ENCODE measurements at regions of chr2 and their contacts with region 1.

Region 1: DNA sequence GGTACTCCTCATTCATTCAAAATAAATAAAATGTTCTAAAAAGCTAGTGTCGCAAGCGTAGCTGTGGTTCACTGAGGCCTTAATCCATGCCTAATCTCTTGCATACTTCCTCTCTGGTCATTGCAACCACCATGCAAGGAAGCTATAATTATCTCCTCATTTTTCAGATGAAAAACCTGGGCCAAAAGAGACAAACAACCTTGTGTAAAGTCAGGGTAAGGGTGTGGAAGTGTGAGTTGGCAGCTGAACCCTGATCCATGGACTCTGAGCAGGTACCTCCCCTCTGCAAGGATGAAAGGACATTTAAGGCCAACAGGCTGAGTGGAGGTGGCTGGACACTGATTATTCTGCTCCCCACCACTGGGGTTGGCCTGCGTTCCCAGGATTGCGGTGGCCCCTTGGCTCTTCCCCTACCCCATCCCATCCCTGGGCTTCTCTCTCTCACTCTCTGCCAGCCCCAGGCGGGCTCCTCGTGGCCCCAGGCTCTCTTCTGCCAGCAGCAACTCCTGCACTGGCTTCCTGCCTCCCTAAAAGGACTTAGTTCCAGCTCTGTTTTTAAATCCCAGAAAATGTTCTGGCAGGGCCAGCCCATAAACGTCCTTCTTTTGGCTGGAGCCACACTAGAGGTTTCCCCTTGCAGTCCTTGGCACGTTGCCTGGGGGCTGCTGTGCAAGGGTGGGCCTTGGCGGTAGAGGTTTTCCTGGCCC is 72.0 kb upstream of the AFF3 start:
- DNase-seq: no peak

Region 2: DNA sequence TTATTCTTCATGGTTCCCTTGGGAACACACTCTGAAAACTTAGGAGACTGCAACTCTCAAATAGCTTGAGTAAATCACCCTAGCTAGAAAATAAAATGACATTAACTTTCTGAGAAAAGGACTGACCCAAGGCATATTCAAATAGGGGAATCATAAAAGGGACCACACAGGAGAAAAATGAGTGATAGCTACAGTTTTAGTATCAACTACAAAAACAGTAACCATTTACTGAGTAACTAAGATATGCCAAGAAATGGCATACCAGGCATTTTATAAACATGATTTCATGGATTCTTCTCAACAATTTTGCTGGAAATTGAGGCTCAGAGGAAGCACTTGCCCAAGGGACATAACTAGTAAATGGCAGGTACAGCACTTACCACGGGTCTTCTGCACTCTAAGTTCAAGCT is 156.5 kb before region 1 on chr2:
- intact Hi-C with region 1: no loop called
- DNase-seq: no peak

Region 3: DNA sequence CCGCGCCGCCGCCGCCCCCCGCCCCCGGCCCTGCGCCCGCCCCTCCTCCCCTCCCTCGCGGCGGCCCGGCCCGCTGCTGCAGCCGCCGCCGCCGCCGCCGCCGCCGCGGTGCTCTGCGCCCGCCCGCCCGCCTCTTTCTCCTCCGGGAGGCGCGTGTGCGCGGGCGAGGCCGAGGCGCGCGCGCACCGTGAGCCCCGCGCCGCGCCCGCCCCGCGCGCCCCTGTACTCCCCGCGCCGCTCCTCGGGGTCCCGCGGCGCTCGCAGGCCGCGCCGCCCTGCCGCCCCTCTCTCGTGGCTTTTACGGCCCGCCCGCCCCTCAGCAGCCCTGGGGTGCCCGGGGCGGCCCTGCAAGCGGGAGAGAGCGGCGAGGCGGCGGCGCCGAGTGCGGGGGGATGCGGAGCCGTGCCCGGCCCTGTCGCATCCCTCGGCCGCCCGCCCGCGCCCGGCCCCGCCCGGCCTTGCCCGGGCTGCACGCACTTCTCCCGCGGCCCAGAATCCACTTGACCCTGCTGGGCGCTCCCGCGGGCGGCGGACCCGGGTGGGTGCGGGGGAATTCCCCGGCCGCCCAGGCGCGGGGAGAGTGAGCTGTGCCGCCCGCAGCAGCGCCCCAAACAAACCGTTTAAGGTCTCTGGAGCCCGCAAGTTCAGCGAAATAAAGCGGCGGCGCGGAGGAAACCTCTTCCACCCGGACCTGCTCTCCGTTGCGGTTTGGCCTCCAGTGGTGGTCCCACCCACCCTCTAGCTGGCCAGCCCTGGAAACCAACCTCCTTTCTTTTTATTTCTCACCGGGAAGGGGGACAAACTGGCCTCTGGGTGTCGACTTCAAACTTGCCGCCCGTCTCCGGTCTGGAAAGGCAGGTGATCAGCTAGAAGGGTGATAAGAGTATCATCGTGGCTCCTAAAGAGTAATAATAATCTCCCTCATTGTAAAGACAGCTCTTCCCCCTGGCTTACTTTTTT is 109.4 kb before region 1 on chr2:
- intact Hi-C with region 1: loop called (anchors 10 kb)
- DNase-seq: no peak

Measured in cardiac septum (tissue), 1 donor.